MCF 10A (cell line): ENCODE measurements at regions of chr10 and their contacts with region 1.

Region 1: GRCh38 chr10:99435986-99436638 is 5.7 kb upstream of the GOT1 start:
- DNase-seq: peak; percentile 65
- H3K4me3 Mint-ChIP-seq: no peak overlapping the region
- H3K27ac Mint-ChIP-seq: no peak overlapping the region
- H3K4me1 Mint-ChIP-seq: peaks cover 6% of the 10 kb centered on the region
- H3K27me3 Mint-ChIP-seq: no peaks in the 10 kb centered on the region
- CTCF ChIP-seq: peak; percentile 27

Region 2: GRCh38 chr10:99224766-99225165 is 211.3 kb before region 1 on chr10:
- CTCF ChIA-PET with region 1: no interaction called
- POLR2A ChIA-PET with region 1: no interaction called
- intact Hi-C with region 1: no loop called
- DNase-seq: no peak
- H3K4me3 Mint-ChIP-seq: no peak overlapping the region
- H3K27ac Mint-ChIP-seq: no peak overlapping the region
- H3K4me1 Mint-ChIP-seq: no peaks in the 10 kb centered on the region
- H3K27me3 Mint-ChIP-seq: peaks cover 73% of the 10 kb centered on the region
- CTCF ChIP-seq: no peak

Region 3: DNA sequence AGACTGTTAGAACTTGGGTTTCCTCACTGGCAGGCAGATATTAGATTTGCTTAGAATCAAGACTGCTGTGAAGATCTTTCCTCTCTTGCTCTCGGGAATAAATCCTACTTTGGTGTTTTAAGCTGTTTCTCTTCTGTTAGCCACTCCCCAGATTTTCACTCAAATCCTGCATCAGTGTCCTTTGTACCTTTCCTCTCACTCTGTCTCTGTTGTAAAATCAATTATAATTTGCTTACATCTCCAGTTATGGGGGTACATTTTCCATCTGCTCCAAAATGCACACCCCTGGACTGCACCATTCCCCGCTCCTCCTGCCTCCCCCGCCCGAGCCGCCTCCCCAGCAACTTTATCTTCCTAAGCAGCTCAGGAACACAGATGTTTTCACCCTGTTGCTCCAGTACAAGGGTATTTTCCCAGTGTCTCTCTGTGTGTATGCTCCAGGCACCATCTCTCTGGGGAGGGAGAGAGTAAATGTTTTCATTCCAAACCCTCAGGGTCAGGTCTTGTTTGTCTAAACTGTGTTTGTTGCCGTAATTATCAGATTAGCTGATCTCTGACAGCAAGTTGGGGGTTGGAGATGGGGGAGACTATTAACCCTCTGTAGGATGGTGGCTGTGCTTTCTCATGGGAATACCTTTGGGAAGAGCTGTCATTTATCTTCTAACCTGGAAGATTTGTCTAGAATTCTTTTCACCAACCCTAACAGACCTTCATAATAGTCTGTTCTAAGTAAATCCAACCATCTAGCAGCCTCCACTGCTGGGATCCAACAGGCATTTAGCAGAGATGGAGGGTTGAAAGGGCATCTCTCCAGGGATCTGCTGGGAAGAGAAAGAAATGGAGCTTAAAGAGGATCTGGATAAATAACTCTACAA is 14.7 kb after region 1 on chr10:
- CTCF ChIA-PET with region 1: interaction called, 17 read pairs
- POLR2A ChIA-PET with region 1: interaction called, 3 read pairs
- intact Hi-C with region 1: no loop called
- DNase-seq: no peak
- H3K4me3 Mint-ChIP-seq: no peak overlapping the region
- H3K27ac Mint-ChIP-seq: no peak overlapping the region
- H3K4me1 Mint-ChIP-seq: no peaks in the 10 kb centered on the region
- H3K27me3 Mint-ChIP-seq: peaks cover 80% of the 10 kb centered on the region
- CTCF ChIP-seq: no peak

Region 4: GRCh38 chr10:99560277-99561126 is 124.4 kb after region 1 on chr10:
- CTCF ChIA-PET with region 1: interaction called, 10 read pairs
- POLR2A ChIA-PET with region 1: interaction called, 4 read pairs
- intact Hi-C with region 1: no loop called
- DNase-seq: peak; percentile 79
- H3K4me3 Mint-ChIP-seq: no peak overlapping the region
- H3K27ac Mint-ChIP-seq: no peak overlapping the region
- H3K4me1 Mint-ChIP-seq: no peaks in the 10 kb centered on the region
- H3K27me3 Mint-ChIP-seq: peaks cover under 1% of the 10 kb centered on the region
- CTCF ChIP-seq: peak; percentile 79

Region 5: DNA sequence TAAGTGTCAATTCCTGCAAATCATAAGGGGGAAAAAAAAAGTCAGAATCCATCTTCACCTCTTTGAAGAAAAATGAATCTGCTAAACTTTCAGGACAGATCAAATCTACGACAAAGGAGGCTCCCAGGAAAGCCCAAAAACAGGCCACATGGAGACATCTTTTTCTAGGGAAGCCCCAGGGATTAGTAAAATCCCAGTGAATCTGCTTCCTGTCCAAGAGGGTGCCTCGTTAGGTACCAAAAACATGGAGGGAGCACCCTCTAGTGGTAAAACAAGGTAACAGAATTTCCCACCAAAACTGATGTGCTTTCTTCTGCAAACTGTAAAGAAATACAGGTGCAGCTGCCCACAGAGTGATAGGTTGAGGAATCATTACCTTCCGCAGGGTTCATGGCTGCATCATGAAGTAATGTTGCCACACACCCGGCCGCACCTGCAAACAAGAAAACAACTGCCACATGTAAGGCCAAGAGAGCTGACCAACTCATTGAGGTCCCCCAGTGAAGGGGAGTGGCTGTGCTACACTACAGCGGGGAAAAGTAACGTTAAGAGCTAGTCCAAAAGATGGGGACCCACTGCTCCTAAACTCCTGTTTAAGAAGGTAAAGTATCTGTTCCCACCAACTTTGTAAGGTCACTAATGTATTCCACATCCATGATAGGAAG is 176.2 kb after region 1 on chr10:
- CTCF ChIA-PET with region 1: interaction called, 338 read pairs
- POLR2A ChIA-PET with region 1: interaction called, 283 read pairs
- intact Hi-C with region 1: loop called (anchors 1 kb)
- DNase-seq: peak; percentile 73
- H3K4me3 Mint-ChIP-seq: no peak overlapping the region
- H3K27ac Mint-ChIP-seq: no peak overlapping the region
- H3K4me1 Mint-ChIP-seq: peaks cover 9% of the 10 kb centered on the region
- H3K27me3 Mint-ChIP-seq: no peaks in the 10 kb centered on the region
- CTCF ChIP-seq: peak; percentile 68

Region 6: DNA sequence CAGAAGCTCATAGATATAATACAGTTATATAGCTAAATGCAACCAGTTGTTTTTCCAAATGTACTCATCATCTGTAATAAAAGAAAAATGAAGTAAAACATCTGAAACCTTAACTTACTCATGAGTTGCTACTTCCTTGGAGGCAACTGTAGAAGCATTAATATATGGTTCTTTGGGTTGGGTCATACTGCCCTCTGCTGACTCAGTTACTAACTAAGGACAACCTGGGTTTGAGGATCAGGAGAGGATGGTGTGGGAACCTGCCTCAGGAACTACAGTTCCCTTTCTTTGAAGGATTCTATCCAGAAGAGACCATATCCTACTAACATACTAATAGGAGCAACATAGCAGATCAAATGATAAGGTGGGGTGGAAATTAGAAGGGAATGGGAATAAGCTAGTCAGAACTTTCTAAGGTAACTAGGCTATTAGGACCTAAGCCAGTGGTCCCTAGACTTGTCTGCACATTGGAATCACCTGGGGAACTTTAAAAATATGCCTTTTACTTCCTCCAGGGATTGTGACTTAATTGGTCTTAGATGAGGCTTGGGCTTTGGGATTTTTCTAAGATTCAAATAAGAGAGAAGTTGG is 275.1 kb after region 1 on chr10:
- CTCF ChIA-PET with region 1: interaction called, 26 read pairs
- POLR2A ChIA-PET with region 1: interaction called, 5 read pairs
- intact Hi-C with region 1: loop called (anchors 5 kb)
- DNase-seq: peak; percentile 65
- H3K4me3 Mint-ChIP-seq: no peak overlapping the region
- H3K27ac Mint-ChIP-seq: peak overlapping the region; percentile 2
- H3K4me1 Mint-ChIP-seq: peaks cover 8% of the 10 kb centered on the region
- H3K27me3 Mint-ChIP-seq: no peaks in the 10 kb centered on the region
- CTCF ChIP-seq: peak; percentile 53